ENCODE measurements at regions of chr19 and their contacts with region 1.

Region 1: DNA sequence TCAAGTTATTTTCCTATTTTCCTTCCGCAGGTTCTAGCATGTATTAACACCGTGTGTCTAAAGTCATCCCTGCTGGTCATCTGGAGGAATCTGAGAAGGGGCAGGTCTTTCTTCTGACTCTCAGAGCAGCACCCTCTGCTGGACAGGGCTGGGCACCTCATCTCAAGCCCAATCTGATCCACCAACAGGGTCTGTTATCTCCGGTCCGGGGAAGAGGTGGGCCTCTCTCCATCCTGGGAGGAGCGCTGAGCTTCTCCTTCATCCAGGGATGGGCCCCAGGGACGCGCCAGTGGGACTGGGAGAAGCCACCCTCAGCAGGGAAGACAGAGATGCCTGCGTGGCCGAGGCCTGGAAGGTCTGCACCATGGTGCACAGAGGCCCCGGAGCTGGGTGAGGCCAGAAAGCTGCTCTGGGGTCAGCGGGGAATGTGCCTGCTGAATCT is 26.0 kb upstream of the ZNF331 start:
- DNase-seq: peak; percentile 65 to 82
- ATAC-seq: peak; percentile 83
- H3K4me3 ChIP-seq: no peak overlapping the region
- H3K27ac ChIP-seq: no peak overlapping the region
- H3K4me1 ChIP-seq: no peaks in the 10 kb centered on the region
- H3K27me3 ChIP-seq: no peaks in the 10 kb centered on the region

Region 2: DNA sequence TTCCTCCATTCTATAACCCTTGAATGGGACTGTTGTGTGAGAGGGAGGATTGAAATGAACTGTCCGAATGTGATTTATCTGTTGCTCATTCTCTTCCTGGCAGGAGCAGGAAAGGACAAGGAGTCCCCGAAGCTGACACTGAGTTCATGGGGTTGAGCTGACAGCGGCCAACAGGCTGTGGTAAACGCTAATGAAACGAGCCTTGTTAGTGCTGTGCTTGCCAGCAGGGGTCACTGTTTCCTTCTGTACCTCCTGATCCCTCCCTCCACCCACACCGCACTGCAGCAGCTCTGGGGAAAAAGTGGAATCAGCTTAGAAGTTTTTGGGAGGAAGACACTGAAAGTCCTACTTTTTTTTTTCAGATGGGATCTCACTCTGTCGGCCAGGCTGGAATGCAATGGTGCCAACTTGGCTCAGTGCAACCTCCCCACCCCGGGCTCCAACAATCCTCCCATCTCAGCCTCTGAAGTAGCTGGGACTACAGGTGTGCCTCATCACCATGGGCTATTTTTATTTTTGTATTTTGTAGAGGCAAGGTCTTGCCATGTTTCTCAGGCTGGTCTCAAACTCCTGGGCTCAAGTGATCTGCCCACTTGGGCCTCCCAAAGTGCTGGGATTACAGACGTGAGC is 86.9 kb before region 1 on chr19:
- intact Hi-C with region 1: loop called (anchors 10 kb)
- DNase-seq: peak; percentile 83 to 85
- ATAC-seq: peak; percentile 91
- H3K4me3 ChIP-seq: no peak overlapping the region
- H3K27ac ChIP-seq: no peak overlapping the region
- H3K4me1 ChIP-seq: no peaks in the 10 kb centered on the region
- H3K27me3 ChIP-seq: no peaks in the 10 kb centered on the region

Region 3: DNA sequence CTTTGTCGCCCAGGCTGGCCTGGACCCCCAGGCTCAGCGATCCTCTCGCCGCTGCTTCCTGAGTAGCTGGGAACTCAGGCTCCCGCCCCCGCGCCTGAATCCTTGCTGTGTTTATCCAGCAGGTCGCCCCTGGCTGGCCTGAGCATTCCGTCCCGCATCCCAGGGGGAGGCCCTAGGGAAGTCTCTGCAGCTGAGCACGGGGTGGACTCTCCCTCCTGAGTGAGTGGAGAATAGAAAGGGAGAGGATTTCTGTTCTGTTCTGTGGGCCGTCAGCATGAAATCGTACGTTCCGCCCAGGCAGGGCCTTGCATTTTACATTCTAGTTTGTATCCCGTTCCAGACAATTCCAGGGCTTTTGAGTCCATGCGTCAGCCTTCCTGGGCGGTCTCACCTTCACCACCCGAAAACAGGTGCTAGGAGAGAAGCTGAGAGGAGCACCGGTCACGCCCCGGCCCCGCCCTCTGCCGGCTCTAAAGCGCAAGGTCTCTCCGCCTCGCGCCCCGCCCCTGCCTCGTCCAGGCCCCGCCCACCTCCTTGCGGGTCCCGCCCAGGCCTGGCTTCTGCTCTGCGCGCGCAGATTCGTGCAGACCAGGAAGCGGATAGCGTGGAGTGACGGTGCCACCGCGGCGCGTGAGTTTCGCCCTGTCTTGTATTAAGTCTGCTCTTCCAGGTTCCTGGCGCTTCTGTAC is 80.4 kb before region 1 on chr19 and contains the start of gene ZNF761:
- intact Hi-C with region 1: loop called (anchors 10 kb)
- DNase-seq: peak; percentile 96 to 99
- ATAC-seq: peak; percentile 100
- H3K4me3 ChIP-seq: peak within 1 kb of the TSS; percentile 57 to 78
- H3K27ac ChIP-seq: peak within 1 kb of the TSS in 1 of 2 donors; percentile 31
- H3K4me1 ChIP-seq: no peaks in the 10 kb centered on the region
- H3K27me3 ChIP-seq: no peaks in the 10 kb centered on the region
- total RNA-seq, gene ZNF761: 9.5 to 10.2 TPM

Region 4: GRCh38 chr19:53545271-53546067 is 33.5 kb after region 1 on chr19:
- intact Hi-C with region 1: no loop called
- DNase-seq: no peak
- ATAC-seq: peak; percentile 48
- H3K4me3 ChIP-seq: no peak overlapping the region
- H3K27ac ChIP-seq: no peak overlapping the region
- H3K4me1 ChIP-seq: no peaks in the 10 kb centered on the region
- H3K27me3 ChIP-seq: no peaks in the 10 kb centered on the region